Naive thymus-derived CD4-positive, alpha-beta T cell (primary cell): ENCODE measurements at regions of chr3 and their contacts with region 1.

Region 1: DNA sequence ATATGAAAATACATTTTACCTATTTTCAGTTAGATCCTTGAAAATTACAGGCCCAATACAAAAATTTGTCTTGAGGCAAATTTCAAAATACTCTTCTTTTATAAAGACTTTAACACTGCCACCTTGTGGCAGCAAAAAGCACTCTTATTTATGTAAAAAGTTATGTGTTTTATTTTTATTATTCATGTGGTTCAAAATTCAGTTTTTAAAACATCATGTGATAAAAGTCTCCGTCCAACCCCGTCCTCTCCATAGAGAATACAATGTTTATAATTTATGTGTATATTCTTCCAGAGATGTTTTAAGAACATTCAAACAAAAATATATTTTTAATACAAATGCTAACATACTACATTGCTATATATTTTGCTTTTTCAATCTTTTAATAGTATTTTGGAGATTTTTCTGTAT is 36.9 kb upstream of the TRIM59 start:
- DNase-seq: peak in 5 of 9 donors; percentile 4 to 27 (median 18)
- ATAC-seq: no peak
- H3K4me3 ChIP-seq: no peak overlapping the region
- H3K4me3 Mint-ChIP-seq: peak overlapping the region in 2 of 10 donors; percentile 65 to 76
- H3K27ac ChIP-seq: no peak overlapping the region
- H3K27ac Mint-ChIP-seq: no peak overlapping the region
- H3K4me1 ChIP-seq: no peaks in the 10 kb centered on the region
- H3K4me1 Mint-ChIP-seq: peaks cover 0 to 10% (median 5%) of the 10 kb centered on the region in 7 donors
- H3K27me3 ChIP-seq: no peaks in the 10 kb centered on the region
- H3K27me3 Mint-ChIP-seq: peaks cover 0 to 14% (median 5%) of the 10 kb centered on the region in 5 donors

Region 2: GRCh38 chr3:159828542-159828943 is 657.9 kb before region 1 on chr3:
- CTCF ChIA-PET with region 1: no interaction called
- POLR2A ChIA-PET with region 1: no interaction called
- intact Hi-C with region 1: loop called in 1 of 2 experiments (anchors 5 kb)
- DNase-seq: peak in 2 of 9 donors; percentile 7 to 9
- ATAC-seq: peak; percentile 59
- H3K4me3 ChIP-seq: no peak overlapping the region
- H3K4me3 Mint-ChIP-seq: no peak overlapping the region
- H3K27ac ChIP-seq: no peak overlapping the region
- H3K27ac Mint-ChIP-seq: no peak overlapping the region
- H3K4me1 ChIP-seq: peaks cover 0 to 3% of the 10 kb centered on the region in 2 donors
- H3K4me1 Mint-ChIP-seq: peaks cover 0 to 3% (median 0%) of the 10 kb centered on the region in 7 donors
- H3K27me3 ChIP-seq: no peaks in the 10 kb centered on the region
- H3K27me3 Mint-ChIP-seq: peaks cover 0 to 7% (median 7%) of the 10 kb centered on the region in 5 donors

Region 3: GRCh38 chr3:159988617-159989271 is 497.7 kb before region 1 on chr3 and contains the start of gene IL12A:
- CTCF ChIA-PET with region 1: no interaction called
- POLR2A ChIA-PET with region 1: no interaction called
- intact Hi-C with region 1: loop called (anchors 1 kb)
- DNase-seq: peak; percentile 59 to 85 (median 75)
- ATAC-seq: peak; percentile 98
- H3K4me3 ChIP-seq: peak within 1 kb of the TSS; percentile 56
- H3K4me3 Mint-ChIP-seq: peak within 1 kb of the TSS; percentile 82 to 89 (median 84)
- H3K27ac ChIP-seq: peak within 1 kb of the TSS; percentile 32
- H3K27ac Mint-ChIP-seq: peak within 1 kb of the TSS in 5 of 9 donors; percentile 58 to 65 (median 62)
- H3K4me1 ChIP-seq: peaks cover 6 to 9% of the 10 kb centered on the region in 2 donors
- H3K4me1 Mint-ChIP-seq: peaks cover 6 to 33% (median 15%) of the 10 kb centered on the region in 7 donors
- H3K27me3 ChIP-seq: no peaks in the 10 kb centered on the region
- H3K27me3 Mint-ChIP-seq: peaks cover 0 to 24% (median 10%) of the 10 kb centered on the region in 5 donors
- total RNA-seq, gene IL12A: 0.40 to 1.8 (median 1.3) TPM

Region 4: DNA sequence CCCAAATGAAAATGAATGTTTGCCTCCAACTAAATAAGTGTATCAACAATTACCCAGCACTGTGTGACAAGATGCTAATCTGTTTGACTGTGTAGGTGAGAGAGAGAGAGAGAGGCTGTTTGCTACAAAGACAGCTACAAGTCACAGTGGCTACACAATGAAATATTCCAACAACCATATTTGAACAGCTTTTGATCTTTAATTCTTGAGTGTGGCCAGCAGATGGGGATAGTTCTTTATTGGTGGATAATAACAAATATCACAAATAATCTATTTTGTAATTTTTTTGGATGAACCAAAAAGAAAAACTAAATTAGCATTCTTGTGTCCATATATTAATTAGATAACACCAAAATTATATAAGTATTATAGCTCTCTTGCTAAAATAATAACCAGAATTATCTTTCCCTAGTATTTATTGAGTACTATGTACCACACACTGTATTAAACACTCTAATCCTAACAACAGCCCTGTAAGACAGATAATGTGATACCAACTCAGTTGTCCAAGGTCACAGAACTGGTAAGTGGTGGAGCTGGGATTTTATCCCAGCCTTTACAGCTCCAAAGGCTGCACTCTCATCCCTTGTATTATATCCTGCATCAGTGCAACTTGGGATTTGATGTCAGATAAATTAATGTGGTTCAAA is 323.1 kb before region 1 on chr3:
- CTCF ChIA-PET with region 1: no interaction called
- POLR2A ChIA-PET with region 1: no interaction called
- intact Hi-C with region 1: loop called in 1 of 2 experiments (anchors 1 kb)
- DNase-seq: peak in 4 of 9 donors; percentile 1 to 19 (median 7)
- ATAC-seq: no peak
- H3K4me3 ChIP-seq: no peak overlapping the region
- H3K4me3 Mint-ChIP-seq: no peak overlapping the region
- H3K27ac ChIP-seq: no peak overlapping the region
- H3K27ac Mint-ChIP-seq: no peak overlapping the region
- H3K4me1 ChIP-seq: no peaks in the 10 kb centered on the region
- H3K4me1 Mint-ChIP-seq: peaks cover 0 to 3% (median 0%) of the 10 kb centered on the region in 7 donors
- H3K27me3 ChIP-seq: no peaks in the 10 kb centered on the region
- H3K27me3 Mint-ChIP-seq: peaks cover 0 to 33% (median 17%) of the 10 kb centered on the region in 5 donors

Region 5: GRCh38 chr3:160449636-160450598 is 36.5 kb before region 1 on chr3 and contains the start of gene TRIM59:
- CTCF ChIA-PET with region 1: no interaction called
- POLR2A ChIA-PET with region 1: interaction called, 3 read pairs
- intact Hi-C with region 1: loop called in 1 of 2 experiments (anchors 1 kb)
- DNase-seq: peak; percentile 90 to 96 (median 93)
- ATAC-seq: peak; percentile 97
- H3K4me3 ChIP-seq: peak within 1 kb of the TSS; percentile 90
- H3K4me3 Mint-ChIP-seq: peak within 1 kb of the TSS; percentile 92 to 100 (median 96)
- H3K27ac ChIP-seq: peak within 1 kb of the TSS; percentile 74
- H3K27ac Mint-ChIP-seq: peak within 1 kb of the TSS; percentile 88 to 96 (median 92)
- H3K4me1 ChIP-seq: peaks cover 10 to 14% of the 10 kb centered on the region in 2 donors
- H3K4me1 Mint-ChIP-seq: peaks cover 8 to 47% (median 40%) of the 10 kb centered on the region in 7 donors
- H3K27me3 ChIP-seq: no peaks in the 10 kb centered on the region
- H3K27me3 Mint-ChIP-seq: peaks cover 0 to 8% (median 0%) of the 10 kb centered on the region in 5 donors
- total RNA-seq, gene TRIM59: 9.8 to 49.2 (median 17.5) TPM